PC-3 (cell line): ENCODE measurements at regions of chr1 and their contacts with region 1.

Region 1: GRCh38 chr1:161153679-161154426 is at the start of gene UFC1:
- DNase-seq: peak; percentile 89
- ATAC-seq: peak; percentile 88
- H3K4me3 ChIP-seq: peak within 1 kb of the TSS; percentile 78
- H3K27ac ChIP-seq: peak within 1 kb of the TSS; percentile 89
- H3K4me1 ChIP-seq: peaks cover 27% of the 10 kb centered on the region
- H3K27me3 ChIP-seq: no peaks in the 10 kb centered on the region
- CTCF ChIP-seq: no peak
- total RNA-seq, gene UFC1: 84.6 and 113 TPM in 2 replicates

Region 2: DNA sequence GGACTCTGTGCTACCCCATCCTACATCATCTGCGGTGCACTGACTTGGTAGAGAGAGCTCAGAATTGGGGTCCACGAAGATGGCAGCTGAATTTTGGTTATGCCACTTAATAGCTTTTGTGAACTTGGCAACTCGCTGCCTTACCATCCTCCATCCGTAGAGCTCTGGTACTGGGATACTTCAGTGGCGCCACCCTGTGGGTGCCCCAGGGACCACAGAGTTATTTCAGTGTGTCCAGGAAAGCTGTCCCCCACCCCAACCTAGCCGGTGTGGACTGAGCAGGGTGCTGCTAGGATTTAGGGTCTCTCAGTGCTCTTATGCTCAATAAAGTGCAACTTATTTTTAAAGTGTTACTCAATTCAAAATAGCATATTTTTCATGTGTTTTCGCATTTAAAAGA is 99.0 kb before region 1 on chr1:
- CTCF ChIA-PET with region 1: no interaction called
- POLR2A ChIA-PET with region 1: no interaction called
- intact Hi-C with region 1: no loop called
- DNase-seq: no peak
- ATAC-seq: no peak
- H3K4me3 ChIP-seq: no peak overlapping the region
- H3K27ac ChIP-seq: no peak overlapping the region
- H3K4me1 ChIP-seq: no peaks in the 10 kb centered on the region
- H3K27me3 ChIP-seq: no peaks in the 10 kb centered on the region
- CTCF ChIP-seq: peak; percentile 39

Region 3: GRCh38 chr1:161117759-161118581 is 35.9 kb before region 1 on chr1 and contains the starts of genes NIT1 and PFDN2:
- CTCF ChIA-PET with region 1: no interaction called
- POLR2A ChIA-PET with region 1: interaction called, 3 read pairs
- intact Hi-C with region 1: loop called (anchors 1 kb)
- DNase-seq: peak; percentile 90
- ATAC-seq: peak; percentile 71
- H3K4me3 ChIP-seq: peak within 1 kb of the TSS; percentile 85
- H3K27ac ChIP-seq: peak within 1 kb of the TSS; percentile 77
- H3K4me1 ChIP-seq: peaks cover 54% of the 10 kb centered on the region
- H3K27me3 ChIP-seq: no peaks in the 10 kb centered on the region
- CTCF ChIP-seq: no peak
- total RNA-seq, gene NIT1: 18.1 and 27.0 TPM in 2 replicates
- total RNA-seq, gene PFDN2: 174 and 197 TPM in 2 replicates

Region 4: GRCh38 chr1:161132410-161133219 is 21.2 kb before region 1 on chr1 and contains the start of gene DEDD:
- CTCF ChIA-PET with region 1: interaction called, 5 read pairs
- POLR2A ChIA-PET with region 1: interaction called, 4 read pairs
- intact Hi-C with region 1: loop called (anchors 2 kb)
- DNase-seq: peak; percentile 97
- ATAC-seq: peak; percentile 84
- H3K4me3 ChIP-seq: peak within 1 kb of the TSS; percentile 90
- H3K27ac ChIP-seq: peak within 1 kb of the TSS; percentile 91
- H3K4me1 ChIP-seq: peaks cover 18% of the 10 kb centered on the region
- H3K27me3 ChIP-seq: no peaks in the 10 kb centered on the region
- CTCF ChIP-seq: 0 out of 2 replicates have a peak, but pooled peaks have one; percentile 39
- total RNA-seq, gene DEDD: 23.4 and 39.2 TPM in 2 replicates

Region 5: GRCh38 chr1:161229896-161230295 is 76.0 kb after region 1 on chr1:
- CTCF ChIA-PET with region 1: no interaction called
- POLR2A ChIA-PET with region 1: no interaction called
- intact Hi-C with region 1: no loop called
- DNase-seq: no peak
- ATAC-seq: no peak
- H3K4me3 ChIP-seq: no peak overlapping the region
- H3K27ac ChIP-seq: no peak overlapping the region
- H3K4me1 ChIP-seq: peaks cover 23% of the 10 kb centered on the region
- H3K27me3 ChIP-seq: no peaks in the 10 kb centered on the region
- CTCF ChIP-seq: peak; percentile 47; the same call in 1 of the 2 replicates

Region 6: DNA sequence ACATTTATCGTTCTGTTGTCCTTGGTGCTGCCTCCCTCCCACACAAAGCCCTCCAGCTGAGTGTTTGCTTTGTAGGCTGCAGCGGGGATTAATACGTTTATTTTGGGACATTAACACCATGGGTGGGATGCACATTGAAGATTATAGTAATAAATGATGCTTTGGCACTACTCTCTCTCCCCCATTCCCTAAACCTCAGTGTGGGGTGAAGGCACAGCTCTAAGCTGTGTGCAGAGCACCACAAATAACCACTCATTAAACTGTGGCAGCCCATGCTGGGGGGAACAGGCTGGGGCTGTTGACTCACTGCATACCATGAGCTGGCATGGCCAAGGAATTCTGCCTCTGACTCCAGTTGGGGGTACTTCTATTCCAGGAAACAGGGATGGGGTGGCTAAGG is 112.3 kb after region 1 on chr1:
- CTCF ChIA-PET with region 1: no interaction called
- POLR2A ChIA-PET with region 1: interaction called, 10 read pairs
- intact Hi-C with region 1: no loop called
- DNase-seq: peak; percentile 41
- ATAC-seq: peak; percentile 38; the same call in 1 of the 2 replicates
- H3K4me3 ChIP-seq: no peak overlapping the region
- H3K27ac ChIP-seq: no peak overlapping the region
- H3K4me1 ChIP-seq: no peaks in the 10 kb centered on the region; the same call in 1 of the 2 replicates
- H3K27me3 ChIP-seq: no peaks in the 10 kb centered on the region
- CTCF ChIP-seq: no peak